ENCODE measurements at regions of chr11 and their contacts with region 1.

Region 1: GRCh38 chr11:62591448-62592145 is at the start of gene TUT1:
- DNase-seq: peak; percentile 95 to 98 (median 97)
- ATAC-seq: peak; percentile 94 to 97 (median 96)
- H3K4me3 ChIP-seq: peak within 1 kb of the TSS; percentile 55 to 97 (median 78)
- H3K27ac ChIP-seq: peak within 1 kb of the TSS; percentile 68 to 98 (median 94)
- H3K4me1 ChIP-seq: peaks cover 5 to 40% (median 23%) of the 10 kb centered on the region in 12 donors
- H3K27me3 ChIP-seq: no peaks in the 10 kb centered on the region
- CTCF ChIP-seq: peak in 6 of 12 donors; percentile 5 to 36 (median 14)
- POLR2A ChIP-seq: peak; percentile 54 to 95
- total RNA-seq, gene TUT1: 6.3 to 16.3 (median 11.3) TPM

Region 2: GRCh38 chr11:62573592-62574362 is 17.8 kb before region 1 on chr11 and contains the start of gene EEF1G:
- intact Hi-C with region 1: loop called in 2 of 10 experiments (anchors 1 to 2 kb)
- DNase-seq: peak; percentile 98 to 99 (median 99)
- ATAC-seq: peak; percentile 95 to 97 (median 96)
- H3K4me3 ChIP-seq: peak within 1 kb of the TSS; percentile 58 to 95 (median 76)
- H3K27ac ChIP-seq: peak within 1 kb of the TSS; percentile 61 to 98 (median 94)
- H3K4me1 ChIP-seq: peaks cover 7 to 72% (median 44%) of the 10 kb centered on the region in 12 donors
- H3K27me3 ChIP-seq: no peaks in the 10 kb centered on the region
- CTCF ChIP-seq: no peak
- POLR2A ChIP-seq: peak; percentile 33 to 95
- total RNA-seq, gene EEF1G: 799 to 1,135 (median 929) TPM

Region 3: DNA sequence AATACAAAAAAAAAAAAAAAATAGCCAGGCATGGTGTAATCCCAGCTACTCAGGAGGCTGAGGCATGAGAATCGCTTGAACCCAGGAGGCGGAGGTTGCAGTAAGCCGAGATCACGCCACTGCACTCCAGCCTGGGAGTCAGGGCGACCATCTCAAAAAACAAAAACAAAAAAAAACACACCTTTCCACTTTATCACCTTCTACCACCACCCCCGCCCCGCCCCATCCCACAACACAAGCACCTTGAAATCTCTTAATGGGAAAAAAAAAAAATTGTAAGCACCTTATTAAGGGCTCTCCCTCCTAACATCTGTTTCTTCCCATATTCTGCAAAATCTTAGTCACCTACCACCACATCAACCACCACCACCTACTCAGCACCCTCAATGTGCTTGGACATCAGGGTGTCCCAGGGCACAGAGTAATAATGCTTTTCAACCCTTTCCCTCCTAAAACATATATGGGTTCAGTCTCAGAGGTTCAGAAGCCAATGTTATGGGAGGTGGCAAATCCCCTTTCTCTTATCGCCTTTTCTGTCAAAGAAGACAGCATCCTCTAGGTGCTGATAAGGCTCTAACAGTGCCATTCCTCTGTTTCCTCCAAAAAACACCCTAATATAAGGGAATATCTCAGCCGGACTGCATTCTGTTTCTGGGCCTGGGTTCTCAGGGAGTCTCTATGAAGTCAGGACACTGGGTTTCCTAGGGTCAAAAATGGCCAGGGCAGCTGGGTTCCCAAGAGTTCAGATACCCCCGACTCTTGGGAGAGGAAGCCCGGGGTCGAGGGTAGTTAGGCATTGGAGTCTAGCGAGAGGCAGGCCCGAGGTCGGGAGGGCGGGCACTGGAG is 60.8 kb after region 1 on chr11:
- intact Hi-C with region 1: no loop called
- DNase-seq: peak in 1 of 5 donors; percentile 24
- ATAC-seq: no peak
- H3K4me3 ChIP-seq: peak overlapping the region; percentile 73 to 97 (median 92)
- H3K27ac ChIP-seq: peak overlapping the region; percentile 63 to 96 (median 91)
- H3K4me1 ChIP-seq: peaks cover 0 to 20% (median 14%) of the 10 kb centered on the region in 12 donors
- H3K27me3 ChIP-seq: no peaks in the 10 kb centered on the region
- CTCF ChIP-seq: no peak
- POLR2A ChIP-seq: no peak

Region 4: GRCh38 chr11:62694455-62695167 is 103.0 kb after region 1 on chr11:
- intact Hi-C with region 1: loop called in 2 of 10 experiments (anchors 2 to 10 kb)
- DNase-seq: peak; percentile 80 to 90 (median 83)
- ATAC-seq: peak; percentile 57 to 85 (median 78)
- H3K4me3 ChIP-seq: no peak overlapping the region
- H3K27ac ChIP-seq: peak overlapping the region in 5 of 12 donors; percentile 13 to 42 (median 34)
- H3K4me1 ChIP-seq: peaks cover 0 to 21% (median 14%) of the 10 kb centered on the region in 12 donors
- H3K27me3 ChIP-seq: no peaks in the 10 kb centered on the region
- CTCF ChIP-seq: peak; percentile 69 to 90 (median 81)
- POLR2A ChIP-seq: no peak

Region 5: GRCh38 chr11:62860835-62861563 is 269.4 kb after region 1 on chr11:
- intact Hi-C with region 1: loop called in 1 of 10 experiments (anchors 5 kb)
- DNase-seq: no peak
- ATAC-seq: no peak
- H3K4me3 ChIP-seq: no peak overlapping the region
- H3K27ac ChIP-seq: peak overlapping the region in 1 of 12 donors; percentile 3
- H3K4me1 ChIP-seq: peaks cover 0 to 29% (median 5%) of the 10 kb centered on the region in 12 donors
- H3K27me3 ChIP-seq: no peaks in the 10 kb centered on the region
- CTCF ChIP-seq: no peak
- POLR2A ChIP-seq: no peak

Measured in heart left ventricle (tissue), 16 donors.